ENCODE measurements at regions of chr11 and their contacts with region 1.

Region 1: GRCh38 chr11:118476676-118477075 is 40.4 kb downstream of the KMT2A start:
- DNase-seq: no peak
- ATAC-seq: no peak
- H3K4me3 ChIP-seq: no peak overlapping the region
- H3K27ac ChIP-seq: no peak overlapping the region
- H3K4me1 ChIP-seq: no peaks in the 10 kb centered on the region
- H3K27me3 ChIP-seq: no peaks in the 10 kb centered on the region
- CTCF ChIP-seq: no peak
- POLR2A ChIP-seq: no peak
- RAD21 ChIP-seq: no peak

Region 2: GRCh38 chr11:118380571-118380970 is 96.1 kb before region 1 on chr11:
- CTCF ChIA-PET with region 1: no interaction called
- POLR2A ChIA-PET with region 1: no interaction called
- dilution Hi-C with region 1: no loop called
- in situ Hi-C with region 1: no loop called
- intact Hi-C with region 1: no loop called
- DNase-seq: peak; percentile 1
- ATAC-seq: peak; percentile 42
- H3K4me3 ChIP-seq: no peak overlapping the region
- H3K27ac ChIP-seq: no peak overlapping the region
- H3K4me1 ChIP-seq: no peaks in the 10 kb centered on the region
- H3K27me3 ChIP-seq: no peaks in the 10 kb centered on the region
- CTCF ChIP-seq: no peak
- POLR2A ChIP-seq: no peak
- RAD21 ChIP-seq: no peak

Region 3: DNA sequence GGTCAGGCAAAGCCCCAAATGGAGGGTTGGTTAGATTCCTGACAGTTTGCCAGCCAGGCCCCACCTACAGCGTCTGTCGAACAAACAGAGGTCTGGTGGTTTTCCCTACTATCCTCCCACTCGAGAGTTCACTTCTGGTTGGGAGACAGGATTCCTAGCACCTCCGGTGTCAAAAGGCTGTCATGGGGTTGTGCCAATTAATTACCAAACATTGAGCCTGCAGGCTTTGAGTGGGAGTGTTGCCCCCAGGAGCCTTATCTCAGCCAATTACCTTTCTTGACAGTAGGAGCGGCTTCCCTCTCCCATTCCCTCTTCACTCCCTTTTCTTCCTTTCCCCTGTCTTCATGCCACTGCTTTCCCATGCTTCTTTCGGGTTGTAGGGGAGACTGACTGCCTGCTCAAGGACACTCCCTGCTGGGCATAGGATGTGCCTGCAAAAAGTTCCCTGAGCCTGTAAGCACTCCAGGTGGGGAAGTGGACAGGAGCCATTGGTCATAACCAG is 45.9 kb after region 1 on chr11:
- CTCF ChIA-PET with region 1: no interaction called
- POLR2A ChIA-PET with region 1: no interaction called
- dilution Hi-C with region 1: no loop called
- in situ Hi-C with region 1: no loop called
- intact Hi-C with region 1: loop called (anchors 2 kb)
- DNase-seq: peak; percentile 30
- ATAC-seq: peak; percentile 67; the same call in 1 of the 2 replicates
- H3K4me3 ChIP-seq: no peak overlapping the region
- H3K27ac ChIP-seq: no peak overlapping the region
- H3K4me1 ChIP-seq: peaks cover 2% of the 10 kb centered on the region; the same call in 1 of the 2 replicates
- H3K27me3 ChIP-seq: no peaks in the 10 kb centered on the region
- CTCF ChIP-seq: peak; percentile 17; the same call in 1 of the 2 replicates
- POLR2A ChIP-seq: no peak
- RAD21 ChIP-seq: no peak